ENCODE measurements at regions of chr14 and their contacts with region 1.

Region 1: DNA sequence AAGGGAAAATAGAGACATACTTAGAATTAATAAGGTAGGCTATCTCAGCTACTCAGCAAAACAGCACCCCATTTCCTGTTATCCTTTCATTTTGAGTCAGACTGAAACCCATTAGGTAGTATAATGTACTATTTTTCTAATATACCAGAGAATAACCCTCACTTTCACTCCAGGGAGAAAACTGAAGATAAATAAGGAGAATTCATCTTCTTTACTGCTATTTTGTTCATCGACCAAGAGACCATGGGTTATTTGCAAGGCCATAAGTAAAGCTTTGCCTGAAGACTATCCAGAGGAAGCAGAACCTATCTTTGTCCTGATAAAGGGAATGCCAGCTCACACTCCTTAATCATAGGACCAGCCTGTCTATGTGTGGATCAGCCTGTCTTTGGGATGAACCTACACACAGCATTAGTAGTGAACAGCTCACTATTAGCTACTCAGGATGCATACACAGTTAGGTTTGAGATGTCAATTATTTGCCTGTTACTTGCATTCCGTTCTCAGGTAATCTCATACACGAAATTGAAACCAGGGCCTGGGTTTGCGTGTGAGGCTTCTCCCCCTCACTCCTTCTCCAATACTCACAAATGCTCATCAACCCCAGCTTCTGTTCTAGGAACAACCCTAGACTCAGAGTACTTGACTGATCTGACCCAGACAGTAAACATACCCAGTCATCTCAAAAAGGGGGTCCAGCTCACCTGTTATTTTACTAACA is 124.4 kb downstream of the DAD1 start:
- DNase-seq: no peak

Region 2: DNA sequence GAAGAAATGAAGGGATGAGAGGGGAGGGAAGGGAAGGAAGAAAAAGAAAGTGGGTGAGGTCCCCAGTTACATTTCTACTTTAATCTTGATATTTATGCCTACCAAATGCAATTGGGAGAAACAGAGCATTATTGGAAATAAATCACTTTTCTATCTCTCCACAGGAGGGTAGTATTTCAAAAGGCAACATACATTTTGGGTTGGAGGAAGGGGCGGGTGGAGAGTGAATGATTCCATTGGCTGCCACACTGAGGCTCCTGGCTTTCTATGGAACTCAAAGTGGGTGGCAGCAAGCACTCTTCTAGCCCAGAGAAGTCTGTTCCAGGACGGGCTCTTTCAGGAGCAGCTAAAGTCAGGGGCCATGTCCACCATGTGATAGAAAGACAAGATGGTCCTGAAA is 316.9 kb before region 1 on chr14:
- intact Hi-C with region 1: loop called in 1 of 2 experiments (anchors 5 kb)
- DNase-seq: no peak

Region 3: DNA sequence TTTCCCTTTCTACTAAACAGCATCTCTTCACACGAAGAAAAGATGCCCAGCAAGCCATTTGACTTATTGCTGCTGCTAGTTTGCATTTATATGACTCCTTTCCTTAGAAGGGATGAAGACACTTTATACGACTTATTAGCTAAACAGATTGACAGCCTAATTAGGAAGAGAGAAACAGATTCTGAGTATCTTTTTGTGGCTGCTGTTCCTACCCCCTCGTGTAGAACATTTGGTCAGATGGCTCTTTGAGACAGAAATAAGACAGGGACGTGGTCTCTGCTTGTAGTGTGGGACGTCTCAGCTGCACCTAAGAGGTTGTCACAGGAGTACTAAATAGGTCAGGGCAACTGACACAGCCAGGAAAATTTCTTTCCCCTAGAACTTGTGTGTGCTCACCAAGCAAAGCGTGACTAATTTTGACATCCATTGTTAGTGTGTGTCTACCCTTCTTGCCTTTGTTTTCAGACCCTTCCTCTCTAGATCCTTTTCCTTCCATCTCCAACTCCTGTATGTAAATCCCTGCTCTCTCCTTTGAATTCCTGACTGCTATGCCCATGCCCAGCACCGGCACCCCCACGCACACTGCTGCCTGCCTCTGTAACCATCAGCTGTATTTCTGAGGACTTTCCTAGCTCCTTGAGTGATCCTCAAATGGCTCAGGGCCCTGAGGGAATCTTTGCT is 41.3 kb after region 1 on chr14:
- intact Hi-C with region 1: no loop called
- DNase-seq: no peak

Measured in posterior vena cava (tissue), 2 donors.